ENCODE measurements at regions of chr18 and their contacts with region 1.

Region 1: DNA sequence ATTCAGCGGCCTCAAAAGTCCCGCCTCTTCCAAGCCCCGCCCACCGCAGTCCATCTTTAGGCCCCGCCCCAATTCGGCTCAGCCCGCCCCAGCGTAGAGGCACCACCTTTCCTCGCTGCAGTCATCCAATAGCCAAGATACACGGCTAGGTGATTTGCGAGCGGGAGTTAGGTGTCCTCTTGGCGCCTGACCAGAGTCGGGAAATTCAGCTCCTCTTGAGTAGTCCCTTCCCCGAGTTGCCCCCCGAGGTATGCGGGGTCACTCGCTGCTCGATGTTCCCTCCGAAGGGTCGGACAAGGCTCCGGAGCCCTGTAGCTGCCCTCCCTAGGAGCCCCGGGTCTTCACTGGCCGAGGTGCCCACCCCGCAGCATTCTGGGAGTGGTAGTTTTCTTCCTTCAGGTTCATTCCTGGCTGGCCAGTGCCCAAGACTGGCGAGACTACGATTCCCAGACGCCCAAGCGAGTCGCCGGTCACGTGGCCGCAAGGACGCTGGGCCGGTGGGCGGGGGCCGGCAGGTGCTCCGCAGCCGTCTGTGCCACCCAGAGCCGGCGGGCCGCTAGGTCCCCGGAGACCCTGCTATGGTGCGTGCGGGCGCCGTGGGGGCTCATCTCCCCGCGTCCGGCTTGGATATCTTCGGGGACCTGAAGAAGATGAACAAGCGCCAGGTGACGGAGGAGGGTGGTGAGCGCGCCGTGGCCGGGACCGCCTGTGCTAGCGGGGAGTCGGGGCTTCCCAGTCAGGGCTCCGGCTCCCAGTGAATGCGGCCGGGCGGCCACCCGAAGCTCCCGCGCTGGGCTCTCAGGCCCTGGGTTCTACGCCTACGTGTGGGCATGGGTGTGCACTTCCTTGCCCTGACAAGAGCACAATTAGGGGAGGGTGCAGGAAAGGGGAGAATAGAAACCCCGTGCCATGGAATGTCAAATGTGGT is at the start of gene SEC11C:
- DNase-seq: peak; percentile 85 to 98
- H3K4me3 ChIP-seq: peak within 1 kb of the TSS; percentile 82 to 97
- H3K27ac ChIP-seq: peak within 1 kb of the TSS; percentile 74 to 82
- H3K4me1 ChIP-seq: peaks cover 0 to 2% of the 10 kb centered on the region in 2 donors
- H3K27me3 ChIP-seq: no peaks in the 10 kb centered on the region
- CTCF ChIP-seq: no peak
- total RNA-seq, gene SEC11C: 6.2 TPM

Region 2: DNA sequence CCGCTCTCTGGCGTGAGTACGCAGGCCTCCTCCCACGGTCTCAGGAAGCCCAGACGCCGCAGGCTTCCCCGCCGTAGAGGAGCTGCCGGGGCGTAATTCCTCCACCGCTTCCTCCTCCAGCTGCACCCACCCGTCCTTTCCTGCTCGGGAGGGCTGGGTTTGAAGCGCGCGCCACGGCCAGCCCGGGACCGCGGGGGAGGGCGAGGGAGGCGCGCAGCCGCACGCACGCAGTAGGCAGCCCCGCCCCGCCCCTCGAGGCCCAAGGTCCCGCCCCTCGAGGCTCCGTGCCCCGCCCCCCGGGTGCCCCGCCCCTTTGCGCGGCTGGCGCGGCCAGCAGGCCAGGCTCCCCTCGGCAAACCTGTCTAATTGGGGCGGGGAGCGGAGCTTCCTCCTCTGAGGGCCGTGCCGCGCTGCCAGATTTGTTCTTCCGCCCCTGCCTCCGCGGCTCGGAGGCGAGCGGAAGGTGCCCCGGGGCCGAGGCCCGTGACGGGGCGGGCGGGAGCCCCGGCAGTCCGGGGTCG is 468.5 kb before region 1 on chr18 and contains the start of gene MALT1:
- intact Hi-C with region 1: loop called (anchors 5 kb)
- DNase-seq: peak; percentile 61 to 96
- H3K4me3 ChIP-seq: peak within 1 kb of the TSS; percentile 91 to 95
- H3K27ac ChIP-seq: peak within 1 kb of the TSS; percentile 75 to 93
- H3K4me1 ChIP-seq: peaks cover 0 to 7% of the 10 kb centered on the region in 2 donors
- H3K27me3 ChIP-seq: no peaks in the 10 kb centered on the region
- CTCF ChIP-seq: no peak
- total RNA-seq, gene MALT1: 14.5 TPM

Region 3: GRCh38 chr18:58768293-58768974 is 371.2 kb before region 1 on chr18:
- intact Hi-C with region 1: loop called (anchors 2 kb)
- DNase-seq: peak in 1 of 2 donors; percentile 83
- H3K4me3 ChIP-seq: peak overlapping the region; percentile 19 to 56
- H3K27ac ChIP-seq: no peak overlapping the region
- H3K4me1 ChIP-seq: peaks cover 0 to 3% of the 10 kb centered on the region in 2 donors
- H3K27me3 ChIP-seq: no peaks in the 10 kb centered on the region
- CTCF ChIP-seq: peak; percentile 81 to 86 (median 85)

Region 4: GRCh38 chr18:59029663-59030429 is 109.8 kb before region 1 on chr18:
- intact Hi-C with region 1: no loop called
- DNase-seq: peak in 1 of 2 donors; percentile 43
- H3K4me3 ChIP-seq: no peak overlapping the region
- H3K27ac ChIP-seq: no peak overlapping the region
- H3K4me1 ChIP-seq: peaks cover 0 to 15% of the 10 kb centered on the region in 2 donors
- H3K27me3 ChIP-seq: no peaks in the 10 kb centered on the region
- CTCF ChIP-seq: no peak

Region 5: GRCh38 chr18:59358712-59359575 is 219.3 kb after region 1 on chr18 and contains the start of gene LMAN1:
- intact Hi-C with region 1: loop called (anchors 1 kb)
- DNase-seq: peak; percentile 82 to 97
- H3K4me3 ChIP-seq: peak within 1 kb of the TSS; percentile 67 to 72
- H3K27ac ChIP-seq: peak within 1 kb of the TSS; percentile 73 to 79
- H3K4me1 ChIP-seq: peaks cover 0 to 5% of the 10 kb centered on the region in 2 donors
- H3K27me3 ChIP-seq: no peaks in the 10 kb centered on the region
- CTCF ChIP-seq: no peak
- total RNA-seq, gene LMAN1: 60.8 TPM